Spleen (tissue), 13 donors: ENCODE measurements at regions of chr2 and their contacts with region 1.

Region 1: GRCh38 chr2:25127646-25128045 is 40.7 kb downstream of the POMC start:
- DNase-seq: no peak
- H3K4me3 ChIP-seq: no peak overlapping the region
- H3K27ac ChIP-seq: peak overlapping the region in 1 of 8 donors; percentile 4
- H3K4me1 ChIP-seq: peaks cover 4 to 41% (median 20%) of the 10 kb centered on the region in 6 donors
- H3K27me3 ChIP-seq: peaks cover 3 to 32% (median 17%) of the 10 kb centered on the region in 7 donors
- CTCF ChIP-seq: no peak
- POLR2A ChIP-seq: no peak

Region 2: GRCh38 chr2:24409700-24410556 is 717.7 kb before region 1 on chr2:
- intact Hi-C with region 1: loop called (anchors 5 kb)
- DNase-seq: no peak
- H3K4me3 ChIP-seq: no peak overlapping the region
- H3K27ac ChIP-seq: no peak overlapping the region
- H3K4me1 ChIP-seq: no peaks in the 10 kb centered on the region
- H3K27me3 ChIP-seq: peaks cover 0 to 16% (median 0%) of the 10 kb centered on the region in 7 donors
- CTCF ChIP-seq: peak; percentile 69 to 86 (median 81)
- POLR2A ChIP-seq: no peak

Region 3: DNA sequence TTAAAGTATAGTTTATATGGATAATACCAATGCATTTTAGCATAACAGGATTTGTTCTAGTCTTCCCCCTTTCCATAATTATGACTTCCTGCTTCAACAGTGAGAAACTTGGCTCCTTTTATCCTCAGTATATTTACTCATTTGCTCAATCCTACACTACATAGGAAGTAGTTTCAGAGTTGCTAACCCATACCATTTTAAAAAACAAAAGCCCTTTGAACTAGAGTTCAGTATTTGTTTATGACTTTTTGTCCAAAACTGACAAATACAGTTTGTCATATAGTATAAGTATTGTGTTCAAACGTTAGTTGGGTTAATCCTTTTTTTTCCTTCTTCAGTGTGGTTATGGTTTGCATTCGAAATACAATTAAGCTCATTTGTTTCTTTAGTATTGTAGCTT is 150.0 kb before region 1 on chr2:
- intact Hi-C with region 1: loop called (anchors 5 kb)
- DNase-seq: no peak
- H3K4me3 ChIP-seq: no peak overlapping the region
- H3K27ac ChIP-seq: no peak overlapping the region
- H3K4me1 ChIP-seq: peaks cover 4 to 31% (median 15%) of the 10 kb centered on the region in 6 donors
- H3K27me3 ChIP-seq: no peaks in the 10 kb centered on the region
- CTCF ChIP-seq: no peak
- POLR2A ChIP-seq: no peak